Activated B cell treated with CpG ODN at 0.5 μM for 24 hours (primary cell): ENCODE measurements at regions of chr7 and their contacts with region 1.

Region 1: DNA sequence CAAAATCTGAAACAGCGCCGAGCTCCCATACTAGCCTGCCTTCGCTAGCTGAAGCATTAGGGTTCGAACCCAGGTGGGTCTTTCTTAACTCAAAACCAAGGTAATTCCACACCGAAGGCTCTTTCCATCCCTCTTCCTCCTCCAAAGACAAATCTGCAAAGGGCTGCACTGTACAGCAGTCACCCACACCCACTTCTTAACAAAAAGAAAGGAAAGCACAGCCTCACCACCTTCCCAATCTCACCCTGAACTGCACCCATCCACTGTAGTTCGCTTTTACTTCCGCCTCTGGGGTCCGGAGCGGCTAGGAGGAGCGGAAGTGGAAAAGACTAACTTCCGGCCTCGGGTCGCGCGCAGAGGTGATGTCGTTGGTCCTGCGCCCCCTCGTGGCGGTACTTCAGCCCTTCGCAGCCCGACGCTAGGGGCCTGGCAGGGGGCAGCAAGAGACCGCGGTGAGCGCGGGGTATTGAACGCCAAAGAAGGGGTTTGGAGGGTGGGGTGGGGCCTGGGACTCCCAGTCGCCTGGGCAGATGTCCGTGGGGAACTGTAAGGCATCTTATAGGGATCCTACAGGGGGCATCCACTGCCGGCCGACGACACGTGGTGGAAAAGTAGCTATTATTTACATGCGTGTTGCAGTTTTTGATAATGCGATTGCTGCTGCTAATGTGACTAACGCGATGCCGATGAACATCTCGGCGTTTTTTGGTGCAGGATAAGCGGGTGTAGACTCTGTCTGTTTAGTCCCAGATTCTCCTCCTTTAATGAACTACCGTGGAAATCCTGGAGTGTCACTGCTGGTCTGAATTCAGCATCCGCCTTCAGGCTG is at the start of gene MTERF1:
- DNase-seq: peak; percentile 92
- ATAC-seq: peak; percentile 98
- H3K4me3 Mint-ChIP-seq: peak within 1 kb of the TSS; percentile 100
- H3K27ac Mint-ChIP-seq: peak within 1 kb of the TSS; percentile 92
- H3K4me1 Mint-ChIP-seq: peaks cover 30% of the 10 kb centered on the region
- H3K27me3 Mint-ChIP-seq: no peaks in the 10 kb centered on the region
- CTCF ChIP-seq: peak; percentile 27
- total RNA-seq, gene MTERF1: 26.2 and 30.3 TPM in 2 replicates

Region 2: DNA sequence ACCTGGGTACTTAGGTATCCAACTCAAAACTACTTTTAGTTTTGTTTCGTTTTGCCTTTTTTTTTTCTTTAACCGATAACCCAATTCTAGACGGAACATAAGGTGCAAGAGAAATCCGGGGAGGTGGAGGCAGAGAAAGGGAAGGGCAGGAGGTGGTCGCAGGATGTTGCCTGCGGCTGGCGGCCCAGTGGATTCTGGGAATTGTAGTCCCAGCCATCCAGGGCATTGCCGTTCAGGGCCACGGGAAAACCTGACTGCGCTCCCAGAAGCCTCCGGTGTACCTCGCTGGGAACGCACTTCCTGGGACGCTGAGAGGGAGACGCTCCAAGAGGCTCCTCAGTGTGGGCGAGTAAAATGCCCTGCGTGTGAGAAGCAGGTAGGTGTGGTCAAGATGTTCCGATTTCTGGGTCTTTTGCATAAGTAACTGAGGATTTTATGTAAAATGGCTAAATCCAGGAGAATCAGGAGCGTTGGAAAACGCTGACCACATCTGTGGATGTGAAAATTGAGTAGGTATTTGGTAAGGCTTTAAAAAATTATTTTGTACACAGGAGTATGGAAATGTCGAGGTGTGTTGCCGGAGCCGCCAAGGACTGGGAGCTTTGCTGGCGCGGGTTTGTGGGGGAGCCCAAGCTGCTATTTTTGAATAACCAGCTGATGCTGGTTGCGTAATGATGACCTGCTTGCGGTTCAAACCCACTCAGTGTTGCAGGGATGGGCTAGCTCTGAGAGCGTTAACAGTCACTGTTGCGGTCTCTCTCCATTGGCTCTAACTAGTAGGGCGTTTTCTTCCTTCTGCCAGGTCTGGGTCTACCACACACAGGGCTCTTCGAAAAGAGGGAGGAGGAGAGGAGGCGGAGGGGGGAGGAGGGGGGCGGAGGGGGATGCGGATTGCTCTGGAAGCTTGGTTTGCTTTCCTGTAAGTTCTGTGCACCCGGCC is 1477.2 kb before region 1 on chr7 and contains the start of gene CLDN12:
- CTCF ChIA-PET with region 1: no interaction called
- POLR2A ChIA-PET with region 1: no interaction called
- intact Hi-C with region 1: loop called (anchors 1 kb)
- DNase-seq: peak; percentile 57
- ATAC-seq: peak; percentile 94
- H3K4me3 Mint-ChIP-seq: peak within 1 kb of the TSS; percentile 97
- H3K27ac Mint-ChIP-seq: peak within 1 kb of the TSS; percentile 89
- H3K4me1 Mint-ChIP-seq: peaks cover 15% of the 10 kb centered on the region
- H3K27me3 Mint-ChIP-seq: no peaks in the 10 kb centered on the region
- CTCF ChIP-seq: no peak
- total RNA-seq, gene CLDN12: 6.2 and 9.0 TPM in 2 replicates

Region 3: GRCh38 chr7:90690159-90690858 is 1190.3 kb before region 1 on chr7:
- CTCF ChIA-PET with region 1: no interaction called
- POLR2A ChIA-PET with region 1: no interaction called
- intact Hi-C with region 1: loop called (anchors 5 kb)
- DNase-seq: no peak
- ATAC-seq: peak; percentile 65
- H3K4me3 Mint-ChIP-seq: no peak overlapping the region
- H3K27ac Mint-ChIP-seq: no peak overlapping the region
- H3K4me1 Mint-ChIP-seq: peaks cover 44% of the 10 kb centered on the region
- H3K27me3 Mint-ChIP-seq: no peaks in the 10 kb centered on the region
- CTCF ChIP-seq: no peak

Region 4: DNA sequence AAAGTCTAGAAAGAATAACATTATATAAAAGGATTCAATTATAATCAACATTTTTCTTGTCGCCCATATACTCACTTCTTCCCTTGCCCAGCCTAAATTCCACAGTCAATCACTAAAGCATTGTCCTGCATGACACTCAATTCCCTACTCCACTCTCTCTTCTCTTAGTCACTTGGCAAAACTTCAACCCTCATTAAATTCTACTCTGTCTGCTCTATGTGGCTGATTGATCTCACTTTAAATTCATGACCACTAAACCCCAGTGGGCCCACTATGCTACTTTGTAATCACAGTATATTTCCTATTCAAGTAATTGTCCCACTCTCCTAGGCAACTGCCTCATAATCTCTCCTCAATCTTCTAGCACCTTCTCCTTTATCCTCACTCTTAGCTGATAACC is 54.2 kb before region 1 on chr7:
- CTCF ChIA-PET with region 1: interaction called, 20 read pairs
- POLR2A ChIA-PET with region 1: interaction called, 4 read pairs
- intact Hi-C with region 1: loop called (anchors 1 kb)
- DNase-seq: no peak
- ATAC-seq: no peak
- H3K4me3 Mint-ChIP-seq: no peak overlapping the region
- H3K27ac Mint-ChIP-seq: no peak overlapping the region
- H3K4me1 Mint-ChIP-seq: no peaks in the 10 kb centered on the region
- H3K27me3 Mint-ChIP-seq: no peaks in the 10 kb centered on the region
- CTCF ChIP-seq: no peak

Region 5: GRCh38 chr7:91918356-91918755 is 37.7 kb after region 1 on chr7:
- CTCF ChIA-PET with region 1: no interaction called
- POLR2A ChIA-PET with region 1: no interaction called
- intact Hi-C with region 1: no loop called
- DNase-seq: no peak
- ATAC-seq: no peak
- H3K4me3 Mint-ChIP-seq: no peak overlapping the region
- H3K27ac Mint-ChIP-seq: no peak overlapping the region
- H3K4me1 Mint-ChIP-seq: no peaks in the 10 kb centered on the region
- H3K27me3 Mint-ChIP-seq: peaks cover 7% of the 10 kb centered on the region
- CTCF ChIP-seq: no peak

Region 6: GRCh38 chr7:91940572-91941341 is 60.1 kb after region 1 on chr7 and contains the start of gene AKAP9:
- CTCF ChIA-PET with region 1: interaction called, 16 read pairs
- POLR2A ChIA-PET with region 1: interaction called, 26 read pairs
- intact Hi-C with region 1: loop called (anchors 1 kb)
- DNase-seq: peak; percentile 85
- ATAC-seq: peak; percentile 91
- H3K4me3 Mint-ChIP-seq: peak within 1 kb of the TSS; percentile 94
- H3K27ac Mint-ChIP-seq: peak within 1 kb of the TSS; percentile 93
- H3K4me1 Mint-ChIP-seq: peaks cover 42% of the 10 kb centered on the region
- H3K27me3 Mint-ChIP-seq: no peaks in the 10 kb centered on the region
- CTCF ChIP-seq: no peak
- total RNA-seq, gene AKAP9: 54.4 and 58.4 TPM in 2 replicates

Region 7: GRCh38 chr7:91961816-91962215 is 81.2 kb after region 1 on chr7:
- CTCF ChIA-PET with region 1: no interaction called
- POLR2A ChIA-PET with region 1: no interaction called
- intact Hi-C with region 1: no loop called
- DNase-seq: no peak
- ATAC-seq: no peak
- H3K4me3 Mint-ChIP-seq: no peak overlapping the region
- H3K27ac Mint-ChIP-seq: no peak overlapping the region
- H3K4me1 Mint-ChIP-seq: peaks cover 10% of the 10 kb centered on the region
- H3K27me3 Mint-ChIP-seq: no peaks in the 10 kb centered on the region
- CTCF ChIP-seq: no peak

Region 8: DNA sequence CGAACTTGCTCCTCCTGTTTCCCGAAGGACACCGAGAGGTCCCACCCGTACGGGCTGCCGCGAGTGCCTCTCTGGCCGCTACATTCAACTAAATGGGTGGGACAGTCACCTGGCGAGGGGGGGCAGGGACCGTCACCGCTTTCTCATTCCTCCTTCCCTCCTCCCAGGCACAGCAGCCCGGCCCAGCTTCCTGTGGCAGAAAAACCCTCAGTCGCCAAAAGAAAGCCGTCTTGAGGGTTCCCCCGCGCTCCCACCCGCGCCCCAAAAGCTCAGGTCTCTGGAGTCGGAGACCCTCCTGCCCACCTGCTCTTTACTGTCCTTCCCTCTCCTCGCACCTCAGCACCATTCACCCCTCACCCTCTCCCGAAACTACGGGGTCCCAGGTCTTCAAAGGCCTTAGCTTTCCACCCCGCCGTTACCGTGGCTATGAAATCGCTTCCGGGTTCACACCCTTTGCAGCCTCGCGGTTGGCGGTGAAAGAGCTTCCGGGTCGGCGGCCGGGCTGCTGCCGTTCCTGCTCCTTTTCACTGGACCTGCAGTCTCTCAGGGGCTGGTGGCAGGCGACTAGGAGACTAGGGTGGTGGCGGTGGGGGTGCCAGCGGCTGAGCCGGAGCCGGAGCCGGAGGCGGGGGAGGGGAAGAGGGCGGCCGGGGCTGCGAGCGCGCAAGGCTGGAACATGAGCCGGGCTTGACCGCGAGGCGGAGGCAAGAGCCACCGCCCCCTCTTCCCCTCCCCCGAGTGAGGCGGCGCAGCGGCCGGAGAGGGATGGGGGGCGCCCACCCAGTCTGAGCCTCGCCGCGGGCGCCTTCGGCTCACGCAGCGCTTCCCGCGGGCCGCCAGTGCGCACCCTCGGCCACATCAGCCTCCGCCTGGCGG is 365.1 kb after region 1 on chr7 and contains the starts of genes ANKIB1 and KRIT1:
- CTCF ChIA-PET with region 1: no interaction called
- POLR2A ChIA-PET with region 1: interaction called, 5 read pairs
- intact Hi-C with region 1: loop called (anchors 1 kb)
- DNase-seq: peak; percentile 79
- ATAC-seq: peak; percentile 84
- H3K4me3 Mint-ChIP-seq: peak within 1 kb of the TSS; percentile 100
- H3K27ac Mint-ChIP-seq: peak within 1 kb of the TSS; percentile 99
- H3K4me1 Mint-ChIP-seq: peaks cover 40% of the 10 kb centered on the region
- H3K27me3 Mint-ChIP-seq: no peaks in the 10 kb centered on the region
- CTCF ChIP-seq: no peak
- total RNA-seq, gene ANKIB1: 42.5 and 50.6 TPM in 2 replicates
- total RNA-seq, gene KRIT1: 53.4 and 61.1 TPM in 2 replicates